ENCODE measurements at regions of chr10 and their contacts with region 1.

Region 1: GRCh38 chr10:107215681-107216080 is 51.2 kb upstream of the SORCS1 start:
- DNase-seq: no peak
- ATAC-seq: no peak
- H3K4me3 ChIP-seq: no peak overlapping the region
- H3K27ac ChIP-seq: no peak overlapping the region
- H3K4me1 ChIP-seq: no peaks in the 10 kb centered on the region
- H3K27me3 ChIP-seq: no peaks in the 10 kb centered on the region
- CTCF ChIP-seq: no peak
- POLR2A ChIP-seq: no peak

Region 2: GRCh38 chr10:107163881-107164861 is 51.5 kb before region 1 on chr10 and contains the start of gene SORCS1:
- intact Hi-C with region 1: no loop called
- DNase-seq: peak in 3 of 5 donors; percentile 27 to 54 (median 45)
- ATAC-seq: peak in 2 of 4 donors; percentile 83 to 89
- H3K4me3 ChIP-seq: peak within 1 kb of the TSS; percentile 9 to 54 (median 42)
- H3K27ac ChIP-seq: peak within 1 kb of the TSS in 3 of 12 donors; percentile 29 to 69 (median 39)
- H3K4me1 ChIP-seq: peaks cover 0 to 13% (median 0%) of the 10 kb centered on the region in 12 donors
- H3K27me3 ChIP-seq: peaks cover 5 to 60% (median 31%) of the 10 kb centered on the region in 9 donors
- CTCF ChIP-seq: no peak
- POLR2A ChIP-seq: no peak
- total RNA-seq, gene SORCS1: 0.23 to 5.7 (median 1.2) TPM

Region 3: DNA sequence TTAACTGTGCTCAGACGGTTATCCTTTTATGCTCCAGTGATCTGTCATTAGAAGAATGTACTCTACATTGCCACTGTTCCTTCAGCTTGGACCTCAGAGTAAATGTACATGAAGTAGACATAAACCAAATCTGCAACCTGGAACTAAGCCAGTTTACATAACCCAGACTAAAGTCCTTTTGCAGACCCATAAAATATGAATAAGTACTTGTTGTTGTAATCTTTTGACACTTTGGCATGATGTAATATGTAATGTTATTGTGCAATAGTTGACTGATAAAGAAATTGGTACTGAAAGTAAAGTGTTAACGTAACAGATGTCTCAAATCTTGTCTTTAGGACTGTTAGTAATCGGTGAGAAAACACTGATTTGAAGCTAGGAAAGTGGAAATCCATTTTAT is 64.6 kb after region 1 on chr10:
- intact Hi-C with region 1: no loop called
- DNase-seq: no peak
- ATAC-seq: no peak
- H3K4me3 ChIP-seq: no peak overlapping the region
- H3K27ac ChIP-seq: no peak overlapping the region
- H3K4me1 ChIP-seq: no peaks in the 10 kb centered on the region
- H3K27me3 ChIP-seq: no peaks in the 10 kb centered on the region
- CTCF ChIP-seq: no peak
- POLR2A ChIP-seq: no peak

Region 4: GRCh38 chr10:107391901-107392300 is 176.2 kb after region 1 on chr10:
- intact Hi-C with region 1: loop called in 1 of 10 experiments (anchors 5 kb)
- DNase-seq: no peak
- ATAC-seq: no peak
- H3K4me3 ChIP-seq: no peak overlapping the region
- H3K27ac ChIP-seq: no peak overlapping the region
- H3K4me1 ChIP-seq: no peaks in the 10 kb centered on the region
- H3K27me3 ChIP-seq: peaks cover 0 to 3% (median 0%) of the 10 kb centered on the region in 9 donors
- CTCF ChIP-seq: no peak
- POLR2A ChIP-seq: no peak